Sigmoid colon (tissue), 7 donors: ENCODE measurements at regions of chr9 and their contacts with region 1.

Region 1: GRCh38 chr9:130701056-130702022 is 7.8 kb downstream of the EXOSC2 start:
- DNase-seq: peak; percentile 88
- H3K4me3 ChIP-seq: no peak overlapping the region
- H3K27ac ChIP-seq: peak overlapping the region in 3 of 4 donors; percentile 7 to 51 (median 29)
- H3K4me1 ChIP-seq: peaks cover 0 to 9% (median 0%) of the 10 kb centered on the region in 4 donors
- H3K27me3 ChIP-seq: no peaks in the 10 kb centered on the region
- CTCF ChIP-seq: peak; percentile 63 to 97 (median 91)
- EP300 ChIP-seq: no peak
- POLR2A ChIP-seq: no peak

Region 2: GRCh38 chr9:130741831-130742449 is 40.6 kb after region 1 on chr9:
- intact Hi-C with region 1: no loop called
- DNase-seq: no peak
- H3K4me3 ChIP-seq: no peak overlapping the region
- H3K27ac ChIP-seq: no peak overlapping the region
- H3K4me1 ChIP-seq: no peaks in the 10 kb centered on the region
- H3K27me3 ChIP-seq: no peaks in the 10 kb centered on the region
- CTCF ChIP-seq: no peak
- EP300 ChIP-seq: no peak
- POLR2A ChIP-seq: no peak

Region 3: DNA sequence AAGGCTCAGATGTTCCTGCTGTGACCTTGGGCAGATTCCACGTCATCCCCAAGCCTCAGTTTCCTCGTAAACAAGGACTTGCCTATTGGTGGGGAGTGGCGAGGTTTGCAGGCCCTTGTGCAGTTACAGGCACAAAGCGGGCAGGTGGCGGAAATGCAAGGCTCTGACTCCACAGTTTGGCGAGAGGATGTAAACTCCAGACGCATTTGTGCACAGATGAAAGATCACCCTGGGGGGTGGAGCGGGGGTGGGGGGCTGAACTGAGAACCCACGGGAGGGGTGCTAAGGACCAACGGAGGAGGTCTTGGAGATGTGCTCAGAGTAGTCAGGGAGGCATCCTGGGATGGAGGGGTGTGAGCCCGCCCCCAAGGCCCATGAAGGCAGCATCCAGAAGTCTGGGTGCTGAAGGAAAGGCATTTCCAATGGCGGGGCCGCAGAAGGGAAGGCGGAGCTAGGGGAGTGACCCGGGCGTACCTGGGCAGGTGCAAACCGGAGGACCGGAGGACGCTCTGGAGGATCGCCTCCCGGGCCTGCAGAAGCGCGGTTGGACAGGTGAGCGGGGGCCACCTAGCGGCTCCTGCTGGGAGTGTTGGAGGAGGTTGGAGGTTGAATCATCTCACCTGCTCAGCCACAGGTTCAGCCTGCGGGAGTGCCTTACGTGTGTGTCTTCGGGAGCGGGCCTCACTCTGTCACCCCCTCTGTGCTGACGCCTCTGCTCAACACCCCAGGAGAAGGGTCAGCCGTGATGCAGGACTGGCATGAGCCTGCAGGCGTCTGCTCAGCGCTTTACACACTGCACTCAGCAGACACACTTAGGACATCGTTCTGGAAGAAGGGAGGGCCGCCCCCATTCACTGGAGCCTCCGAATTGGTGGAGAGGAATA is 239.6 kb after region 1 on chr9:
- intact Hi-C with region 1: loop called (anchors 1 kb)
- DNase-seq: peak; percentile 79
- H3K4me3 ChIP-seq: no peak overlapping the region
- H3K27ac ChIP-seq: no peak overlapping the region
- H3K4me1 ChIP-seq: peaks cover 0 to 42% (median 29%) of the 10 kb centered on the region in 4 donors
- H3K27me3 ChIP-seq: peaks cover 32 to 62% (median 60%) of the 10 kb centered on the region in 3 donors
- CTCF ChIP-seq: peak; percentile 80 to 86 (median 82)
- EP300 ChIP-seq: no peak
- POLR2A ChIP-seq: no peak

Region 4: DNA sequence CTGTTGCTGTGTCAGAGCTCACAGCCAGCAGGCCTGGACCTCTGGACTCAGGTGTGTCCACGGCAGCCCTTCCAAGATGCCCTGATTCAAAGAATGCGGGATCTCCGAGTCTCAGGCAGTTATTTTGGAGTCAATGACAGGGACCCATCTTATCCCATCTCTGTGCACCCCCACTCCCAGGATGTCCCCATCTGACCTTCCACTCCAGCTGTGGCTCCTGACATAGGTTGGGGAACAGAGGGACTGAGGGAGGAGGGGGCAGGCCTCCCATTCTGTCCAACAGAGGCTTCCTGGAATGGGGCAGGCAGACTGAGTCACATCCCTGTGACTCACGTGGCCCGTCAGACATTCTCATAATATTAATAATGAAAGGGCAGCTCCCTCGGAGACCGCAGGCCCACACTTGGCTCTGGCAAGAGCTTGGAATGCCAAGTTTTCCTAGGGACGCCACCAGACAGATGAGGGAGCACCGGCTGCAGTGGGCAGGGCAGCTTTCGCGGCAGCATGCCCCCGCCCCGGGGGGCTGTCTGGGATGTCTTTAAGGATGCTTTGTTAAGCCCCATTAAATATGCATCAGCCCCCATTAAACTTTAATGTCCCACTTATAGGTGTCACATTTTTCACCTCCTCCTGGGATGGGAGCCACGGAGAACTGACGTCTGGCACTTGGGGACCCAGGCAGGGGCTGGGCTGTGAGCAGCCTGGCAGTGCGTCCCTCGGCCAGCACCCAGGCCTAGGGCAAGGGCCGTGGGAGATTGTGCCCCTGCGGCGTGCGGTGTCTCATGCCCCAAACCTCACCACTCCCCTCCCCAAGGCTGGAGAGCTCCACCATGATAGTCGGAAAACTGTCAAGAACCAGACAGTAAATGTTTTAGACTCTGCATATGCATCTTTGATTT is 261.3 kb after region 1 on chr9:
- intact Hi-C with region 1: no loop called
- DNase-seq: no peak
- H3K4me3 ChIP-seq: no peak overlapping the region
- H3K27ac ChIP-seq: no peak overlapping the region
- H3K4me1 ChIP-seq: peaks cover 0 to 14% (median 11%) of the 10 kb centered on the region in 4 donors
- H3K27me3 ChIP-seq: no peaks in the 10 kb centered on the region
- CTCF ChIP-seq: no peak
- EP300 ChIP-seq: peak in 1 of 4 donors; percentile 41
- POLR2A ChIP-seq: no peak

Region 5: DNA sequence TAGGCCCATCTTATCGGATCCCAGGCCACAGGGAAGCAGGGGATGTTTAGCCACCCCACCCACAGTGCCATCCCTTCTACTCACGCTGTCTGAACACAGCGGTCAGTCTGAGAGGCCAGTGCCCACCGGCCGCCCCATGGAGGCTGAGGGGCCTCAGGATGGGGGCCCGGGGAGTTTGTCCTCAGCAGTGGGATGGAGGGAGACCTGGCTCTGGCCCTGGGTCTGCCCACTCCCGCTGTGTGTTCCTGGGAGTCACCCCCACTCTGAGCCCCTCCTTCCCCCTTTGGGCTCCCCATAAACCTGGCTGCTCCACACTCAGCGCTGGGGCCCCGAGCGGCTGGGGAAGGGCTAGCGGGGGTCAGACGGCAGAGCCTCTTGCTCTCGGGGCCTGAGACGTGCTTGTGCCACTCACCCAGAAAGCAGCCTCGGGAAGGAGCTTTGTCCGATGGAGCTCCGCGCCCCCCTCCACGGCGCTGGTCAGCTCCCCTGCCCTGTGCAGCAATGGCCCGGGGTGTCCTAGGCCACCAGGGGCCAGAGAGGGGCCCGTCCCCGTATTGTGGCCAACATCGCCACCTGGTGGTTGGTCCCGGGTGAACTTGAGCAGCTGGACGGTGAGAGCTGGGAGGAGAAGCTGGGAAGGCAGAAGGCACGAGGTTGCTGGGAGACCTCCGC is 296.7 kb after region 1 on chr9:
- intact Hi-C with region 1: loop called (anchors 5 kb)
- DNase-seq: no peak
- H3K4me3 ChIP-seq: no peak overlapping the region
- H3K27ac ChIP-seq: no peak overlapping the region
- H3K4me1 ChIP-seq: no peaks in the 10 kb centered on the region
- H3K27me3 ChIP-seq: peaks cover 0 to 50% (median 29%) of the 10 kb centered on the region in 3 donors
- CTCF ChIP-seq: peak in 3 of 4 experiments; percentile 35 to 60 (median 55)
- EP300 ChIP-seq: no peak
- POLR2A ChIP-seq: no peak

Region 6: GRCh38 chr9:131046581-131047202 is 345.4 kb after region 1 on chr9:
- intact Hi-C with region 1: loop called (anchors 2 kb)
- DNase-seq: peak; percentile 77
- H3K4me3 ChIP-seq: no peak overlapping the region
- H3K27ac ChIP-seq: no peak overlapping the region
- H3K4me1 ChIP-seq: peaks cover 0 to 6% (median 2%) of the 10 kb centered on the region in 4 donors
- H3K27me3 ChIP-seq: peaks cover 0 to 5% (median 0%) of the 10 kb centered on the region in 3 donors
- CTCF ChIP-seq: peak; percentile 67 to 91 (median 78)
- EP300 ChIP-seq: no peak
- POLR2A ChIP-seq: no peak